MCF 10A (cell line): ENCODE measurements at regions of chrX and their contacts with region 1.

Region 1: GRCh38 chrX:83008415-83008814 is 499.7 kb upstream of the POU3F4 start:
- DNase-seq: peak; percentile 34
- H3K4me3 Mint-ChIP-seq: no peak overlapping the region
- H3K27ac Mint-ChIP-seq: no peak overlapping the region
- H3K4me1 Mint-ChIP-seq: no peaks in the 10 kb centered on the region
- H3K27me3 Mint-ChIP-seq: no peaks in the 10 kb centered on the region
- CTCF ChIP-seq: peak; percentile 54

Region 2: DNA sequence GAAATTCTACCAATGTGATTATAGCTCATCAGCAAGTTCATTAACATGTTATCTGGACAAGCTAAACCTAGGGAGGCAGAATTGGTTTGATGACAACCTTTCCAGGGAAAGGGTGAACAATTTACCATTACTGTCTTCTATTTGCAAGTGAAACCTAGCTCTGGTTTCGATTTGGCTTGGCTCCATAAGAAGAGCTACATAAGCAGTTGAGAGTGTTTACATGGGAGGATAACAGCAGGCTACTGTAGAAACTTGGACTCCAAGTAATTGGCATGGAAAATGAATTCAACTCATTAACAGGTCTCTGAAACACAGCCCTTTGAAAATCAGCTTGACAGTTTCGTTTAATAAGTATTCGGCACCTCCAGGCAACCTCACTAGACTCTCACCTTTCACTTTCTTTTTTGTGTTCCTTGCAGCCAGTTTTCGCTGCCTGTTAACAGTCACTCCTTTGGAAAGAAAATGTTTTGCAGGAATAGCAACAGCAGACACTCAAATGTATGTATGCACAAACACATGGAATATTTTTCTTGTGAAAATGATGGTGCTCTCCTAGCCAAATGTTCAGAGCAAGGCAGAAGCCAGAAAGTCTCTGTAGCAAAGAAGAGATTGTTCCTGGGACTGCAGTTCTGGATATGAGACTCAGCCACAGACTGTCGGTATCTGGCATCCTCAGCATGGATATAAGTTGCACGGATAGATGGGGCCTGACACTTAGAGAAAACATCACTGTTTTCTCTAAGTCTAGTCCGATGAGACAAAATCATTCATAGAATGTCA is 527.2 kb after region 1 on chrX:
- CTCF ChIA-PET with region 1: no interaction called
- POLR2A ChIA-PET with region 1: no interaction called
- intact Hi-C with region 1: loop called (anchors 10 kb)
- DNase-seq: peak; percentile 52
- H3K4me3 Mint-ChIP-seq: peak overlapping the region; percentile 69
- H3K27ac Mint-ChIP-seq: no peak overlapping the region
- H3K4me1 Mint-ChIP-seq: no peaks in the 10 kb centered on the region
- H3K27me3 Mint-ChIP-seq: peaks cover 21% of the 10 kb centered on the region
- CTCF ChIP-seq: no peak